Activated naive CD4-positive, alpha-beta T cell treated with anti-CD3 and anti-CD28 coated beads for 36 hours (primary cell): ENCODE measurements at regions of chr3 and their contacts with region 1.

Region 1: DNA sequence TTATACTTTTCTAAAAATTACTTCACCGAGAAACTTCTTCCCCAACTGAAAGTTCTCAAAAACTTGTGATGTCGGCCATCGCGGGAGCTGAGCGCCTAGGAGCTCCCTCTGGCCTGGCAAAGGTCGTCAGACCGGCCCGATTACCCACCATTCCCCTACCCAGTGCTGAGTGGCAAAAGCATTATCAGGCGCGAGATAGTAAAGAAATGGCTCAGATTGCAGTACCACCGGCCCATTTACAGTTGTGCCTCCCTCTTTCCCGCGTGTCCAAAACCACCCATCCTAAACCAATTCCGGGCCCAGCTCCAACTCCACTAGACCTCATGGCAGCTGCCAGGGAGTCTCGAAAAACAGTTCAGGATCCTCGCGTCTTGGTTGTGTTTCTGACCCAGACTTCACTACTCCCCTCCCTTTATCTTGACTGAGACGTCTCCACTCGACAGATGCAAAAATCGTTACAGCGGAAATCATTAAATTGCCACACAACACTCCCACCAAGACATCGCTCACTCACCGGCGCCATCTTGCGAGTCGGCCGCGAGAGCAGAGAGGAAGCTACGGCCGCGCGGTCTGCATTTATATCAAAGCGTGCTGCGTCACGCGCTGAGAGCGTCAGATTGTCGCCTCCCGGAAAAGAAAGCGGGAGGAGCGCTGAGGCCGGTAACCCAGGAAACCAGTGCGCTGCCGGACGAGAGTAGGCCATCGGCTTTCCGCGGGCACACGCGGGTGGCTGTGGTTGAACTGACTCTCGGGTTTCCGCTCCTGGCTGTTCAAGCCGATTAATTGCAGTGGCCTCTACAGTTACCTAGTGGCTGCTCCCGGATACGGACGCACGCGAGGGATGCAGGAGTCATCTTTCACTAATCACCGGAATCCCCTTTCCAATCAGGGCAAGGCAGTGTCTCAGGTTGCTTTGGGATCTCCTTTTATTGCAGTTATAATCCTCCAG is at the start of gene RPL22L1:
- DNase-seq: peak; percentile 95
- H3K4me3 Mint-ChIP-seq: peak within 1 kb of the TSS; percentile 94
- H3K27ac Mint-ChIP-seq: peak within 1 kb of the TSS; percentile 98
- H3K4me1 Mint-ChIP-seq: peaks cover 14% of the 10 kb centered on the region
- H3K27me3 Mint-ChIP-seq: no peaks in the 10 kb centered on the region
- total RNA-seq, gene RPL22L1: 480 to 525 TPM

Region 2: GRCh38 chr3:169772897-169773828 is 1096.8 kb before region 1 on chr3 and contains the start of gene MYNN:
- CTCF ChIA-PET with region 1: no interaction called
- intact Hi-C with region 1: loop called (anchors 1 kb)
- DNase-seq: peak; percentile 94
- H3K4me3 Mint-ChIP-seq: peak within 1 kb of the TSS; percentile 94
- H3K27ac Mint-ChIP-seq: peak within 1 kb of the TSS; percentile 97
- H3K4me1 Mint-ChIP-seq: peaks cover 36% of the 10 kb centered on the region
- H3K27me3 Mint-ChIP-seq: no peaks in the 10 kb centered on the region
- total RNA-seq, gene MYNN: 12.0 to 13.5 TPM

Region 3: GRCh38 chr3:170469151-170470062 is 400.5 kb before region 1 on chr3:
- CTCF ChIA-PET with region 1: no interaction called
- intact Hi-C with region 1: no loop called
- DNase-seq: no peak
- H3K4me3 Mint-ChIP-seq: no peak overlapping the region
- H3K27ac Mint-ChIP-seq: no peak overlapping the region
- H3K4me1 Mint-ChIP-seq: no peaks in the 10 kb centered on the region
- H3K27me3 Mint-ChIP-seq: peaks cover 20% of the 10 kb centered on the region

Region 4: DNA sequence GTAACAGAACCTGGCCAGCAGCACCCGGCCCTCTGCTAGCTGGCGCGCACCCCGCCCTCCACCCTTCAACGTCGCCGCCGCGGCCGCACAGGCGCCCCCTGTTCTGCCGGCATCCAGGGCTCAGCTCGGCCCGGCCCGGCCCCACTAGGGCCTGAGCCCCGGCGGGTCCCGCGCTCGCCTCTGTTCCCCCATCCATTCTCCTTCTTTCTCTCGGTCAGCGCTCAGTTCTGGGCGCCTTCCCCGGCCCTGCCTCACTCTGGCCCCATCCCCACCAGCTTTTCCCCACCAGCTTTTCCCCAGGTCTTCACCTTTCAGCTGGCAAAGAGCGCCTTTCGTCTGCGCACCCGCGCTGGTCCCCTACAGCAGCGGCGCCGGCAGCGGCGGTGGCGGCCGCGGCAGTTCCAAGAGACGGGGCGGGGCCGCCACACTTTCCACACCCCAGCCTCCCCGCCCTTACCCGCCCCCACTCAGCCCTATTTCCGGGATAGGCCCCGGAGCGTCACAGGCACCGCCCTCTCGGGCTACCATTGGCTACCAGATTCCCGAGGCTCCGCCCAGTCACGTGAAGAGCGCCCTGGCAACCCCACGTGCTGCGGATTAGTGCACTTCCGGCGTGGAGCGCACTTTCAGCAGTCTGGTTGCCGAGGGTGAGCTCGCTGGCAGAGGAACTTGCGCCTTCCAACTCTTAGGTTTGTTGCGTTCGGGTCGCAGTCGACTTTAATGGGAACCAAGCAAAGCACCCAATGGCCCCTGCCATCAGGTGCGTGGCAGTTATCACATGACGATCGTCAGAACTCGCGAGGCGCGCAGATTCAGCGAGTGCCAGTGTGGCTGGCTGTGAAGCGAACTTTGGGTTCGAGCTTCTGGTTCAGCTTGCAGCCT is 38.6 kb after region 1 on chr3 and contains the start of gene EIF5A2:
- CTCF ChIA-PET with region 1: interaction called, 4 read pairs
- intact Hi-C with region 1: loop called (anchors 1 kb)
- DNase-seq: peak; percentile 97
- H3K4me3 Mint-ChIP-seq: peak within 1 kb of the TSS; percentile 95
- H3K27ac Mint-ChIP-seq: peak within 1 kb of the TSS; percentile 80
- H3K4me1 Mint-ChIP-seq: peaks cover 22% of the 10 kb centered on the region
- H3K27me3 Mint-ChIP-seq: no peaks in the 10 kb centered on the region
- total RNA-seq, gene EIF5A2: 3.4 to 5.2 TPM

Region 5: DNA sequence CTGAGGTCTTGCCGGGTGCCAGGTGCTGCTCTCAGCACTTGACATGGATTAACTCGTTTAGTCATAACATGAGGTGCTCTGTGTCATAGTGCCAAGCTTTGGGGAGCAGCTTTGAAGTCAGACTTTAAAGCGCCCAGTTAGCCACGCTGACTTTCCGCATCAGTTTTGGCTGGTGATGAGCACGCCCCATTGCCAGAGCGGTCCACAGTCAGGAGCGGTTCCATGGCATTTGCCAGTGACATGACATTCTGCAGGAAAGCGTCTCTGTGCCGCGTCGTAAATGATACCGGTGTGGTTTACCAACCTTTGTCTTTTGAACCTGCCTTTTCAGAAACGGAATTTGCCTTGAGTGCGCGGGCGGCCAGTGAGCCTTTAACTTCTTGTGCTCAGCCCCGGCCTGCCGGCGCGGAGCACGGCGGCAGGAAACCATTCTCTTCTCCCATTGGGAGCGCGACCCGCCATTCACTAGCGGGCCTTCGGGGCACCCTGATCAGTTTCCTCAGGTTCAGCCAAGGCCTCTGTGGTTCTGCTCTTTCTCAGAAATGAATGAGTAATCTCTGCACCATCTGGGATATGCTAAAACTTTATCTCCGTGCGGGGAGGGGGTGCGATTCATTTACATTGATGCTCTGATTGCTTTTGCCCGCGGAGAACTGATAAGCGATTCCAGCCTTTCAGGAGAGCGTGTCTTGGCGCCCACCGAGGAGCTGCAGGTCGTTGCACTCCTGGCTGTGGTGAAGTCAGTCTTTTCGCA is 158.3 kb after region 1 on chr3:
- CTCF ChIA-PET with region 1: no interaction called
- intact Hi-C with region 1: loop called (anchors 1 kb)
- DNase-seq: peak; percentile 80
- H3K4me3 Mint-ChIP-seq: no peak overlapping the region
- H3K27ac Mint-ChIP-seq: no peak overlapping the region
- H3K4me1 Mint-ChIP-seq: peaks cover 4% of the 10 kb centered on the region
- H3K27me3 Mint-ChIP-seq: peaks cover 14% of the 10 kb centered on the region